ENCODE measurements at regions of chr3 and their contacts with region 1.

Region 1: DNA sequence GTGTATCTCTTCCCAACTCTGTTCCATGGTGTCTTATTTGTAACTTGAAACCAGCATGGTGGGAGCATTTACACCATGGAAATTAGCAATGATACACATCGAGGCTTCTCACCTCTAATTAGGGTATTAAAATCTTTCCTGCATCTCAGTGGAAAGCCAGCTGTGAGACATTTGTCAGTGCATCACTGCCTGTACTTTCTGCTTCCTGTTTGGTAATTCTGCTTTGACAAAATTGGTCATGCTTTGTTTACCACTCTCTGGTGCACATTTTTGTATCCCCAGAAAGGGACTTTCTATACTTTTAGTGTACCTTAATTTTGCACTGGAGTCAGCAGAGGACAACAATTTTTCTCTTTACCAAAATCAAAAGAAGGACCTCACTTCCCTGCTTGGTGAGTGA is 402.1 kb downstream of the PDCD6IP start:
- DNase-seq: no peak
- ATAC-seq: peak; percentile 76
- H3K4me3 Mint-ChIP-seq: peak overlapping the region; percentile 17
- H3K27ac Mint-ChIP-seq: peak overlapping the region; percentile 91
- H3K4me1 Mint-ChIP-seq: peaks cover 82% of the 10 kb centered on the region
- H3K27me3 Mint-ChIP-seq: no peaks in the 10 kb centered on the region
- CTCF ChIP-seq: no peak

Region 2: DNA sequence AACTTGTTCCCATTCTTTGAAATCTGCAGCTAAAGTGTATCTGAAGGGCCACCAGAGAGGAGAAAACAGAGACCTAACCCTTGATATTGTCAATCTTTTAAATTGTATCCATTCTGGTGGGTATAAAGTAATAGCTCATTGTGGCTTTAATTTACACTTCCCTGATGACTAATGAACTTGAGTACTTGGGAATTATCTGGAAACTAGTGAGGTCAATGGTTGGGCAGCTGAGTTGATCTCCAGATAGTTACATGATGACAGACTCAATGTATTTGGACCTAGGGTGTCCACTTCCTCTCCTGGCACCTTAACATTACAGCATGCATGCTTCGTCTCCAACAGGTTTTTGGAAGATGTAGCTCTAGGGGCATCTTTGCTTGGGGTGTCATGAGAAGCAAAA is 206.9 kb before region 1 on chr3:
- CTCF ChIA-PET with region 1: no interaction called
- POLR2A ChIA-PET with region 1: no interaction called
- intact Hi-C with region 1: no loop called
- DNase-seq: no peak
- ATAC-seq: no peak
- H3K4me3 Mint-ChIP-seq: no peak overlapping the region
- H3K27ac Mint-ChIP-seq: no peak overlapping the region
- H3K4me1 Mint-ChIP-seq: no peaks in the 10 kb centered on the region
- H3K27me3 Mint-ChIP-seq: peaks cover 12% of the 10 kb centered on the region
- CTCF ChIP-seq: no peak

Region 3: GRCh38 chr3:34020726-34021680 is 179.6 kb before region 1 on chr3:
- CTCF ChIA-PET with region 1: no interaction called
- POLR2A ChIA-PET with region 1: no interaction called
- intact Hi-C with region 1: loop called (anchors 5 kb)
- DNase-seq: no peak
- ATAC-seq: no peak
- H3K4me3 Mint-ChIP-seq: peak overlapping the region; percentile 36
- H3K27ac Mint-ChIP-seq: no peak overlapping the region
- H3K4me1 Mint-ChIP-seq: peaks cover 70% of the 10 kb centered on the region
- H3K27me3 Mint-ChIP-seq: no peaks in the 10 kb centered on the region
- CTCF ChIP-seq: no peak

Region 4: DNA sequence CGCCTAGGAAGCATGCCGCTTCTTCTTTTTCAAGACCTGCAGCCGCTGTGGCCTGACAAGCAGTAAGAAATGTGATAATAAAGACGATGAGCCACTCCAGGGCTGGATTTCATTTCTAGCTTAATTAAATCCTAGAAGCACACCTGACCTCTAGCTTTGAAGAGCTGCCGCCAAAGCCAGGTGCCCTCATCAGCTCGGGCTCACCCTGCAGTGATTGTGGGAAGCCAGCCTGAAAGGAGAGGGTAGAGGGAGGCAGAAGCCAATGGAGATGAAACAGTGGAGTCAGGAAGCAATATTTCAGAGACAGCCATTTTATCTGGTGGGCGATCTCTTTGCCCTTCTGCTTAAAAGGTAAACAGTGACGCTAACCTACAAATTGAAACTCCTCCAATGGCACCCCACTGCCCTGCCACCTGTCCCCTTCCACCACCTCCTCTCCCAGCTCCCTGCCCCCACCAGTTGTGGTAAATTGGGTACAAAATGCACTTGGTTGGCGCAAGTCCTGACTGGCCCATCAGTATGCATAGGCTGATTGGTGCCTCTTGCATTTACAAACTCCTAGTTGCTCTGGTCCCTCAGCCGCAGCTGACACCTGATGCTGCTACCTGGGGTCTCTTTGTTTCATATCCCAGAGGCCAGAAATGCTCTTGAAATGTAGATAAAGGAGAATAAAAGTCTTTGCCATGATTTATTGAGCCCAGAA is 16.8 kb before region 1 on chr3:
- CTCF ChIA-PET with region 1: no interaction called
- POLR2A ChIA-PET with region 1: no interaction called
- intact Hi-C with region 1: no loop called
- DNase-seq: no peak
- ATAC-seq: no peak
- H3K4me3 Mint-ChIP-seq: no peak overlapping the region
- H3K27ac Mint-ChIP-seq: peak overlapping the region; percentile 11
- H3K4me1 Mint-ChIP-seq: peaks cover 24% of the 10 kb centered on the region
- H3K27me3 Mint-ChIP-seq: no peaks in the 10 kb centered on the region
- CTCF ChIP-seq: no peak